ENCODE measurements at regions of chr7 and their contacts with region 1.

Region 1: GRCh38 chr7:148575640-148576411 is 14.7 kb upstream of the C7orf33 start:
- DNase-seq: peak; percentile 22
- ATAC-seq: peak; percentile 98
- H3K4me3 ChIP-seq: no peak overlapping the region
- H3K27ac ChIP-seq: no peak overlapping the region
- H3K4me1 ChIP-seq: 0 out of 4 replicates have a peak, but pooled peaks cover 0 to 4% of the 10 kb centered on the region in 2 experiments
- H3K27me3 ChIP-seq: no peaks in the 10 kb centered on the region
- CTCF ChIP-seq: peak; percentile 70 to 89 (median 83)
- POLR2A ChIP-seq: no peak
- RAD21 ChIP-seq: peak; percentile 91

Region 2: DNA sequence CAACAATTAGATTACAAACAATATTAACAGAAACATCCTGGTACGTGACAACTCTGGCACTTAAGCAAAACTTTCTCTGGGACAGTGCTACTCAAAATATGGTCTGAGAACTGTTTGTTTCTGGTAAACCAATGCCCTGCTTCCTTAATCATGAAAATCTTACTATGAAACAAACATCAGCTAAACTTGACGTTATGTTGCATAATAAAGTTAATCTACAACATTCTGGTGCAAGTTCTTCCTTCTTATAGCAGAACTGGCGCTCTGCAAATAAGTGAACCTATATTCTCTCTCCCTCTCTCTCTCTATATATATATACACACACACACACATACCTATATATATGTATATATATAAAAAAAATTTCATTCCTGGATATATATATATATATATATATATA is 22.5 kb after region 1 on chr7:
- CTCF ChIA-PET with region 1: no interaction called
- POLR2A ChIA-PET with region 1: no interaction called
- RAD21 ChIA-PET with region 1: no interaction called
- intact Hi-C with region 1: no loop called
- DNase-seq: no peak
- ATAC-seq: no peak
- H3K4me3 ChIP-seq: no peak overlapping the region
- H3K27ac ChIP-seq: no peak overlapping the region
- H3K4me1 ChIP-seq: no peaks in the 10 kb centered on the region
- H3K27me3 ChIP-seq: no peaks in the 10 kb centered on the region
- CTCF ChIP-seq: no peak
- POLR2A ChIP-seq: no peak
- RAD21 ChIP-seq: no peak

Region 3: DNA sequence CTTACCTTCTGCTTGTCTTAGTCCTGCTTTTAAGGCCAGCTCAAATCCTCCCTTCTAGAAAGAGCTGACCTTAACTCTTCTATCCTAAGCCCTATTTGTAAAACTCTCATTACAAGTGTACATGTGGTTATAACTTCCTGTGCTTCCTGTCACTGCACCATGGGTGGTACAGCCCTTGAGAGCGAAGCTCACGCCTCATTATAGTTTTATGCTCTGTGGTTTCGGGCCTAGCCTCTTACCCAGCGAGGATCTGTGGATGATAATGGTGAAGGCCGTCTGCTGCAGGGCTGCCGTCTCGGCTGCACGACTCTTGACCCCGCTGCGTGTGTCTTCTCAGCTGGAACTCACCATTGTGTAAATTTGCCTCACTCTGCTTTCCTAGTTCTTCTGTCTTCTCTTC is 197.5 kb after region 1 on chr7:
- CTCF ChIA-PET with region 1: no interaction called
- POLR2A ChIA-PET with region 1: no interaction called
- RAD21 ChIA-PET with region 1: no interaction called
- intact Hi-C with region 1: loop called (anchors 10 kb)
- DNase-seq: no peak
- ATAC-seq: no peak
- H3K4me3 ChIP-seq: no peak overlapping the region
- H3K27ac ChIP-seq: peak overlapping the region; percentile 46; the same call in 1 of the 2 replicates
- H3K4me1 ChIP-seq: peaks cover 8 to 30% of the 10 kb centered on the region in 2 experiments
- H3K27me3 ChIP-seq: no peaks in the 10 kb centered on the region
- CTCF ChIP-seq: no peak
- POLR2A ChIP-seq: no peak
- RAD21 ChIP-seq: no peak

Region 4: GRCh38 chr7:148809856-148810255 is 234.0 kb after region 1 on chr7:
- CTCF ChIA-PET with region 1: no interaction called
- POLR2A ChIA-PET with region 1: no interaction called
- RAD21 ChIA-PET with region 1: no interaction called
- intact Hi-C with region 1: no loop called
- DNase-seq: no peak
- ATAC-seq: no peak; the same call in 1 of the 2 replicates
- H3K4me3 ChIP-seq: no peak overlapping the region
- H3K27ac ChIP-seq: no peak overlapping the region
- H3K4me1 ChIP-seq: no peaks in the 10 kb centered on the region
- H3K27me3 ChIP-seq: no peaks in the 10 kb centered on the region
- CTCF ChIP-seq: no peak
- POLR2A ChIP-seq: no peak
- RAD21 ChIP-seq: no peak

Region 5: GRCh38 chr7:148905093-148905666 is 329.4 kb after region 1 on chr7:
- CTCF ChIA-PET with region 1: no interaction called
- POLR2A ChIA-PET with region 1: no interaction called
- RAD21 ChIA-PET with region 1: no interaction called
- intact Hi-C with region 1: no loop called
- DNase-seq: no peak
- ATAC-seq: no peak
- H3K4me3 ChIP-seq: no peak overlapping the region
- H3K27ac ChIP-seq: no peak overlapping the region
- H3K4me1 ChIP-seq: no peaks in the 10 kb centered on the region
- H3K27me3 ChIP-seq: peaks cover 3% of the 10 kb centered on the region; the same call in 1 of the 2 replicates
- CTCF ChIP-seq: no peak
- POLR2A ChIP-seq: no peak
- RAD21 ChIP-seq: no peak